Colonic mucosa (tissue), 4 donors: ENCODE measurements at regions of chrX and their contacts with region 1.

Region 1: GRCh38 chrX:25737540-25737939 is 400.6 kb upstream of the MAGEB18 start:
- DNase-seq: no peak
- H3K4me3 ChIP-seq: no peak overlapping the region
- H3K27ac ChIP-seq: no peak overlapping the region
- H3K4me1 ChIP-seq: no peaks in the 10 kb centered on the region
- H3K27me3 ChIP-seq: no peaks in the 10 kb centered on the region
- CTCF ChIP-seq: no peak

Region 2: GRCh38 chrX:25755194-25755593 is 17.7 kb after region 1 on chrX:
- intact Hi-C with region 1: loop called (anchors 2 kb)
- DNase-seq: no peak
- H3K4me3 ChIP-seq: no peak overlapping the region
- H3K27ac ChIP-seq: no peak overlapping the region
- H3K4me1 ChIP-seq: no peaks in the 10 kb centered on the region
- H3K27me3 ChIP-seq: no peaks in the 10 kb centered on the region
- CTCF ChIP-seq: no peak